ACHN (cell line): ENCODE measurements at regions of chr14 and their contacts with region 1.

Region 1: DNA sequence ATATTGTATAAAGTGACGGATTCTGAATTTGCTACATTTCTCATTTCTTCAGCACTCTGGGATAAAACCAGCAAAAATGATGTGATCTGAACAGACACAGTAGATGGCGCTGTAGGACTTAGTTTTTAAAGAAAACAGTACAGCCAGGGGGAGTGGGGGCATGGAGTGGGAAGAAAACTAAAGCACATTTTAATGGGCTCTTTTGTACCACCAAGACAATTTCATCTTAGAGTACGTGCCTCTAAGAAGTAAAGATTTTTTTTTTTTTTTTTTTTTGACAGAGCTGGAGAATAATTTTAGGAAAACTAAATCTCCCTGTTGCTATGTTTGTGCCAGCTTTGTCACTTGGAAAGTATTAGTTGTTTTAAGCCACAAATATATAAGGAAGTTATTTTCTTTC is 124.4 kb downstream of the RAD51B start:
- DNase-seq: peak; percentile 92

Region 2: DNA sequence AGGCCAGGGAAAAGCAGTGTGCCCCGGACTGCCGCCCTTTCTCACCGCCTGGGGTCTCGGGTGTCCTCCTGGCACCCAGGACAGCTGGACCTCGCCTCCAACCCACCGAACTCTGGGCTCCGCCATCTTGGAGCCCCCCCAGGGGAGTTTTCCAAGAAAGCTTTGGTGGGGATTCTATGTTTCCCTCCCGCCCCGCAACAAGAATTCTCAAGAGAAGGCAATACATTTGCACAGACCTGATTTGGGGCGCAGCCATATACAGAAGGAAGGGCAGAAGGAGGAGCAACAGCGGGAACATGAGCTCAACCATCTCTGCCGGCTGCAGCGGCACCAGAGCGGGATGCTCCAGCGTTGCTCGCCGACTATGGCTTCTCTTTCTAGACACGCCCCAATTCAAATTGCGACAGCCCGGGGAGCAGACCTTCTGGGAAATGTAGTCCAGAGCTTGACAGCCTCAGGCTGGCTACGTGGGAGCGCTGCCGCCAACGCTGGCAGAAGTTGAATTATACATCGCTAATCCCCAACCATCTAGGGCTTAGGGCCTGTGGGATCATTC is 248.5 kb before region 1 on chr14 and contains the start of gene RDH11:
- in situ Hi-C with region 1: no loop called
- DNase-seq: peak; percentile 90

Region 3: DNA sequence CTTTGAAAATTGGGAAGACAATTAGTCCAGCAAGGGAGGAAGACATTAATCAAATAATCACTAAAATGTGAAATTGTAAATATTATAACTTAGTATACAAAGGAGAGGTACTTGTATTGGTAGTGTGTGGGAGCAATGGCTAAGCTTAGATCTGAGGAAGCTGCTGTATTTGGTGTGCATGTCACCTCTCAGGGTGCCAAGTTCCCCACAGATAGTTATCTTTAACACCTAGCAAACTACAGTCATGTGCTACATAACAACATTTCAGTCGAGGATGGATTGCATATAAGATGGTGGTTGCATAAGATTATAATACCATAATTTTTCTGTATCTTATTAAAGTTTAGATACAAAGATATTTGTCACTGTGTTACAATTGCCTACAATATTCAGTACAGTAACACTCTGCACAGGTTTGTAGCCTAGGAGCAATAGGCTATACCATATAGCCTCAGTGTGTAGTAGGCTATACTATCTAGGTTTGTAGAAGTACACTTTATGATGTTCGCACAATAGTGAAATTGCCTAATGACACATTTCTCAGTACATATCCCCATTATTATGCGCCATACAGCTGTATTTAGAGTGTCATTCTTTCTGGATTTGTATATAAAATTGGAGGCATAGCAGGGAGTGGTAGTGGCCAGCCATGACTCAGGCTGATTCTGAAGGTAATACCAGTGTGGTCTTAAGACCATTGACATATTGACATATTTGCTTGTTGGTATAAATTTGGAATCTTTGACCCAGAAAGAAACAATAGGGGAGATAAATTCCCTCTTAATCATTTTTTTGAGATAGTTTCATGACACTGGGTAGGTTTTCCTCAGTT is 68.6 kb before region 1 on chr14:
- in situ Hi-C with region 1: no loop called
- DNase-seq: no peak

Region 4: GRCh38 chr14:68137704-68138619 is 194.0 kb after region 1 on chr14:
- in situ Hi-C with region 1: loop called (anchors 25 kb)
- DNase-seq: peak; percentile 98

Region 5: DNA sequence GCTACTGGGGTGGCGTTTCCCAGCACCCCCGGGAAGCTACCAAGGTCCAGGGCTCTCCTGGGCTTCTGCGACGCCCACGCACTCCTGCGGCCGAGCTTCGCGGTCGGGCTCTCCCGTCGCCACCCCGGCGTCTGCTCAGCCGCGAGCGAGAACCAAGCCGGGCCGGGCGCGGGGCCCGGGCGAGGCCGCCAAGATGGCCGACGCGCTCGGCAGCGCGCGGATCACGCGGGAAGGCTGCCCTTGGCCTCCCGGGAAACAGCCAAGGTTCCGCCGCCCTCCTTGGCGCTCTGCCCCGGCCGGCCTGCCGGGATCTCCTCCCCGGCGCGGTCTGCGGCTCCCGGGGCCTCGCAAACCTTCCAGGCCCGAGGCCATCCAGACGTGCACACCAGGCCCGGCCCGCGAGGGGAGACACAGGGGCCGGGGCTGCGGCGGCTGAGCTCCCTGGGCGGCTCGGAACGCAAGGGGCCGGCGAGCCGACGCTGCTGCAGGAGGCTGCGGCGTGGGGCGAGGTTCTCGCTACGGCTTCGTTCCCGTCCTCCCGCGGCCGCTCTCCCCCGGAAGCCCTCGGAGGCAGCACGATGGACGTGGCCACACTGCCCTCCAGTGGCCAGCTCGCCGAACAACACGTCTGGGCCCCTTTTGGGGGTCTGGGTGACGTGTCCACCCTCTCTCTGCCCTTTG is 872.5 kb after region 1 on chr14:
- in situ Hi-C with region 1: loop called (anchors 25 kb)
- DNase-seq: peak; percentile 82